Caco-2 (cell line): ENCODE measurements at regions of chr15 and their contacts with region 1.

Region 1: DNA sequence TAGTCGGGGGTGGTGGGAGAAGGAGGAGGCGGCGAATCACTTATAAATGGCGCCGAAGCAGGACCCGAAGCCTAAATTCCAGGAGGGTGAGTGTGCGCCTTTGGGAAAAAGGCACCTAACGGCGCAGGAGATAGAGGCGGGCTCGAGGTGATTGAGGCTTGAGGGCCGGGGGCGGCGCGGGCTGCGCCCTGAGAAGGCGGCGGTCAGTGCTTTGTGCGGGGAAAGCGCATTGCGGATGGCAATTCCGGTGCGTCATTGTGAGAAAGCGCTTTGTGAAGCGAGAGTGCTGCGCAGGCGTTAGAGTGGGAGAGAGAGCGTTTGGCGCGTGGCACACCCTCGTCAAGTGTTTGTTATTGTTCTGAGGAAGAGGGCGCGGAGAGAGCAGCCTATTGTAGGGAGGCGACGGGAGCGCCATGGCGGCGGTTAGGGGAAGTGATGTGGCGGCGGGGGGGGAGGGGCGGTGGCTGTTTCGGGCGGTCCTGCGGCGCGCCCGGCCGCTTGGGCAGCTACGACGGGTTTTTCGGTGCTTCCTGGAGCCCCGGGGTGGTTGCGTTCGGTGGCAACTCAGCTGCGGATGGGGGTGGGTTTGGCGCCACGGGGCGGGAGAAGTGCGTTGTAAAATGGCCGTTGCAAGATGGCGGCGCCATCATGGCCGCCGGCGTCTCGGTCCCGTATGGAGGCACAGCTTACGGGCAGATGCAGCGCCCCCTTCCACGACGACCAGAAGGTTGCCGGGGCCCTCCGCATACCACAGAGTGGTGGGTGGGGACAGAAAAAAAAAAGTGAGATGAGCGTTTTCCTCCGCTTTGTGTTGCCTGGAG is 492 bp downstream of the MORF4L1 start:
- DNase-seq: peak; percentile 93
- H3K4me3 ChIP-seq: peak overlapping the region; percentile 98
- H3K4me3 Mint-ChIP-seq: peak overlapping the region; percentile 83
- H3K27ac Mint-ChIP-seq: peak overlapping the region; percentile 99
- H3K4me1 ChIP-seq: peaks cover 29% of the 10 kb centered on the region
- H3K4me1 Mint-ChIP-seq: peaks cover 24% of the 10 kb centered on the region
- H3K27me3 ChIP-seq: no peaks in the 10 kb centered on the region
- H3K27me3 Mint-ChIP-seq: no peaks in the 10 kb centered on the region
- CTCF ChIP-seq: peak; percentile 24 to 67

Region 2: DNA sequence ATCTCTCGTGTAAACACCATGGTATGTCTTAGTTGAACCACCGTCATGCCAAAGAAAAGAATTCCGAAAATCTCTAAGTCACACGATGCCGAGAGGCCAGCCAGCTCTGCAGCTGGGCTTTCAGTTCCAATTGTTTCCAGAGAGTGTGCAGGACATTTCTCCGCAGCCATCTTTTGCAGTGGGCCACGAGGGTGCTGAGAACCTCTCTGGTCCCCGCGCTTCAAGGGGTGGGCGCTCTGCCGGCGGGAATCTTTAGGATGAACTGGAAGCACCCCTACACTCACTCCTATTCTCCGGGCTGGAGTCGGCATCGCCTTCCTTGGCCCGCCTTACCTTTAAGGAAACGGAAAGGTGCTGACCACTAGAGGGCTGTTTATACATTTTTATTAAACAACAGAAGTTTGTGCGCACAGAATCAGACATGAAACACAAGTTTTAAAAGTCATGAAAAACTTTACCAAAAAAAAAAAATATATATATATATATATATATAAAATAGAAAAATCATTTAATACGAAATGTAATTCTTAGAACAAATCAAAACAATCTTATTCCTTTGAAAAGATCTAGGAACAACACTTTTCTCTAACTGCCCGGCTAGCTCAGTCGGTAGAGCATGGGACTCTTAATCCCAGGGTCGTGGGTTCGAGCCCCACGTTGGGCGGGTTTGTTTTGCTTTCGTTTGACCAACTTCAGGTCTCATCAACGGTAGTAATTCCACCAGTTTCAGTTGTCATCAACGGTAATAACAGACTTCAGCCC is 13.0 kb before region 1 on chr15:
- CTCF ChIA-PET with region 1: interaction called, 8 read pairs
- POLR2A ChIA-PET with region 1: interaction called, 22 read pairs
- intact Hi-C with region 1: loop called (anchors 1 kb)
- DNase-seq: peak; percentile 86 to 90
- H3K4me3 ChIP-seq: peak overlapping the region; percentile 40
- H3K4me3 Mint-ChIP-seq: peak overlapping the region; percentile 87
- H3K27ac Mint-ChIP-seq: peak overlapping the region; percentile 88
- H3K4me1 ChIP-seq: no peaks in the 10 kb centered on the region
- H3K4me1 Mint-ChIP-seq: no peaks in the 10 kb centered on the region
- H3K27me3 ChIP-seq: no peaks in the 10 kb centered on the region
- H3K27me3 Mint-ChIP-seq: no peaks in the 10 kb centered on the region
- CTCF ChIP-seq: peak; percentile 54 to 60